Right ventricle myocardium inferior (tissue), 1 donor: ENCODE measurements at regions of chr15 and their contacts with region 1.

Region 1: DNA sequence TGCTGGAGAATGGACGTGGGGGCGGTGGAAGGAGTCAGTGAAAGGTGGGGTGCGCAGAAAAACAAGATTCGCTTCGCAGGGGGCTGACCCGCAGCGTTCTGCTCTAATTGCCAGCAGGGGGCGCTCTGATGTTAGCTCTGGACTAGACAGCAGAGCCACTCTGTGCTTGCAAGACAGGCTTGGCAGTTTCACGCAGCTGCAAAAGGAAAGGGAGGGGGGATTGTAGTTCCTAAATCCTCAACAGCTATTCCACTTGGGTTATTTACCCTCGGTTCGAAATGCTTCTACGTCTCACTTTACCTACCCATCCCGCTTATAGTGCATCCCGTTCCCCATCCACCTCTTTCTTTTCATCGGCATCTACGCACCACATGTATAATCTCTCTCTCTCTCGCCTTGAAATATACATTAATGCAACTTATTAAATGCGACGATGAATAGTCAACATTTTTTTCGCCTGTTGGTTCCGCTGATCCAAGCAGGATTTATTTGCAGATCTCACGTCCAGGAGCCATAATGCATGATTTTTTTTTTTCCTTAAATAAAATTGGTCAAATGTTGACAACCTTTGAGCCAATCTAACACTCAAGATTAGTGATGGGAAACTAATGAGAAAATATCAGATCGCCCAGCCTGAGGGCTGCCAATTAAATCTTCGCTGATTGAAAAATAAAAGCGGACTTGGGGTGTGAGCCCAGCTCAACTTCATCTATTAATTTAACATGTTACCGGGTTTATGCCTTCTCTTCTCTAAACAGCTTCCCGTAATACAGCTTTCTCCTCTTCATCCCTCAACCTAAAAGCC is 216.4 kb downstream of the MEIS2 start:
- DNase-seq: peak; percentile 91
- ATAC-seq: peak; percentile 88

Region 2: GRCh38 chr15:36996538-36997181 is 112.7 kb after region 1 on chr15:
- intact Hi-C with region 1: loop called (anchors 10 kb)
- DNase-seq: no peak
- ATAC-seq: peak; percentile 50

Region 3: GRCh38 chr15:37880009-37880834 is 996.3 kb after region 1 on chr15:
- intact Hi-C with region 1: loop called (anchors 5 kb)
- DNase-seq: no peak
- ATAC-seq: no peak